HCT116 (cell line): ENCODE measurements at regions of chr12 and their contacts with region 1.

Region 1: GRCh38 chr12:27014085-27014858 is at the start of gene TM7SF3:
- DNase-seq: peak; percentile 77
- ATAC-seq: peak; percentile 95
- H3K4me3 ChIP-seq: peak within 1 kb of the TSS; percentile 47 to 87
- H3K27ac ChIP-seq: peak within 1 kb of the TSS; percentile 61
- H3K4me1 ChIP-seq: peaks cover 18 to 34% of the 10 kb centered on the region in 2 experiments; a peak in 3 of 4 replicates
- H3K27me3 ChIP-seq: no peaks in the 10 kb centered on the region
- CTCF ChIP-seq: peak; percentile 78 to 97 (median 84)
- POLR2A ChIP-seq: peak; percentile 47
- RAD21 ChIP-seq: peak; percentile 82
- total RNA-seq, gene TM7SF3: 46.5 TPM

Region 2: GRCh38 chr12:26937875-26938700 is 76.2 kb before region 1 on chr12 and contains the starts of genes FGFR1OP2 and INTS13:
- CTCF ChIA-PET with region 1: interaction called, 3 read pairs
- POLR2A ChIA-PET with region 1: no interaction called
- RAD21 ChIA-PET with region 1: no interaction called
- intact Hi-C with region 1: loop called (anchors 5 kb)
- DNase-seq: peak; percentile 97
- ATAC-seq: peak; percentile 96
- H3K4me3 ChIP-seq: peak within 1 kb of the TSS; percentile 71 to 98
- H3K27ac ChIP-seq: peak within 1 kb of the TSS; percentile 77
- H3K4me1 ChIP-seq: peaks cover 3 to 26% of the 10 kb centered on the region in 2 experiments
- H3K27me3 ChIP-seq: no peaks in the 10 kb centered on the region
- CTCF ChIP-seq: no peak
- POLR2A ChIP-seq: peak; percentile 81
- RAD21 ChIP-seq: no peak
- total RNA-seq, gene FGFR1OP2: 29.6 TPM
- total RNA-seq, gene INTS13: 50.5 TPM

Region 3: DNA sequence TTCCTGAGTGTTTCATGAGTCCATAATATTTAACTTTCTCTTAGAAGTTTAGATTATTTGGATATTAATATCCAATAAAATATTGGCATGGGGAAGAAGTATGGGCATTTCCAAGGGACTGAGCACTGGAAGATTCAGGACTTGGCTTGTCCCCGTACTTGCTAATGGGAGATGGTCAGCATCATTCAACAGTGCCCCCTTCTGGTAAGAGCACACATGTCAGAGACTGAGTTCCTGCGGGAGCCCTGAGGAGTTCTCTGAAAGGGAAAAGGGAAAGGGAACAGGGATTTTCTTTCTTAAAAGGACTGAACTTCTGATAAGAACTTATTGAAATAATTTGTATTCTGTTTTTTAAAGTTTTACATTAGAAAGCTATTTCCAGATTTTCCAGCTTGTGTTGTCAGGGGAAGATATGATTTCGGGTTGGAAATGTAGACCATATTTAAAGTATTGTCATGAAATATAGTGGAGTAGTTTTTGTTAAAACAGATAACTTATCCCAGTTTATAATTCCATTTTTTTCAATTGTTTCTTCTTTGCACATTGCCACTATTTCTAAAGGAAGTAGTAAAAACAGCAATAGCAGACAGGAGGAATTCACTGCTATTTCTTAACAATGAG is 127.9 kb after region 1 on chr12:
- CTCF ChIA-PET with region 1: interaction called, 3 read pairs
- POLR2A ChIA-PET with region 1: no interaction called
- RAD21 ChIA-PET with region 1: no interaction called
- intact Hi-C with region 1: loop called (anchors 2 kb)
- DNase-seq: peak; percentile 60
- ATAC-seq: peak; percentile 98
- H3K4me3 ChIP-seq: no peak overlapping the region
- H3K27ac ChIP-seq: no peak overlapping the region
- H3K4me1 ChIP-seq: no peaks in the 10 kb centered on the region
- H3K27me3 ChIP-seq: no peaks in the 10 kb centered on the region
- CTCF ChIP-seq: peak; percentile 62 to 86 (median 85); a peak in 5 of 6 replicates
- POLR2A ChIP-seq: no peak
- RAD21 ChIP-seq: peak; percentile 75

Region 4: GRCh38 chr12:27305673-27306456 is 291.6 kb after region 1 on chr12:
- CTCF ChIA-PET with region 1: interaction called, 68 read pairs
- POLR2A ChIA-PET with region 1: no interaction called
- RAD21 ChIA-PET with region 1: no interaction called
- intact Hi-C with region 1: no loop called
- DNase-seq: peak; percentile 27
- ATAC-seq: no peak
- H3K4me3 ChIP-seq: no peak overlapping the region
- H3K27ac ChIP-seq: no peak overlapping the region
- H3K4me1 ChIP-seq: no peaks in the 10 kb centered on the region
- H3K27me3 ChIP-seq: no peaks in the 10 kb centered on the region
- CTCF ChIP-seq: peak in 2 of 3 experiments; percentile 54 to 69; a peak in 3 of 6 replicates
- POLR2A ChIP-seq: no peak
- RAD21 ChIP-seq: peak; percentile 68